ENCODE measurements at regions of chr13 and their contacts with region 1.

Region 1: GRCh38 chr13:102580552-102581169 is 16.1 kb upstream of the TPP2 start:
- DNase-seq: no peak
- ATAC-seq: peak; percentile 75

Region 2: GRCh38 chr13:102517959-102518358 is 62.7 kb before region 1 on chr13:
- intact Hi-C with region 1: no loop called
- DNase-seq: no peak
- ATAC-seq: no peak

Region 3: DNA sequence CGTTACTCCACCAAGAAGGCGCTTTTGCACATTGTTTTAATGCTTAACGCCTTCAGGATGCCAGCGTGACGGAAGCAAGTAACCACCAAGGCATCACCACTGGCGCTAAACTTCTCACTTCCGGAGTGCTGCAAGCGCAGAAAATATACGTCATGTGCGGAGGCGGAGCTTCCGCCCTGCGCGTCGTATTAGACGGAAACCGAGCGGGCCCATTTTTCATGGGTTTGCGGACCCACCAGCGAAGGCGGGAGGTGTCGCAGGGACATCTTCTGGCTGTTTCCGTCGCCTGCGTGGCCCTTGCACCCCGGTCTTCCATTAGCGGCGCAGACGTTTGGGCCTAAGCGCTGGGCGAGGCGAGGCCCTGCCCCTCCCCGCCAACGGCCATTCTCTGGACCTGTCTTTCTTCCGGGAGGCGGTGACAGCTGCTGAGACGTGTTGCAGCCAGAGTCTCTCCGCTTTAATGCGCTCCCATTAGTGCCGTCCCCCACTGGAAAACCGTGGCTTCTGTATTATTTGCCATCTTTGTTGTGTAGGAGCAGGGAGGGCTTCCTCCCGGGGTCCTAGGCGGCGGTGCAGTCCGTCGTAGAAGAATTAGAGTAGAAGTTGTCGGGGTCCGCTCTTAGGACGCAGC is 265.1 kb after region 1 on chr13 and contains the start of gene ERCC5:
- intact Hi-C with region 1: loop called in 1 of 2 experiments (anchors 5 kb)
- DNase-seq: peak; percentile 93 to 97
- ATAC-seq: peak; percentile 92
- total RNA-seq, gene ERCC5: 54.1 to 66.1 TPM